CD4-positive, alpha-beta T cell (primary cell): ENCODE measurements at regions of chr2 and their contacts with region 1.

Region 1: GRCh38 chr2:134245340-134245984 is 8.4 kb upstream of the MGAT5 start:
- DNase-seq: peak; percentile 63 to 87 (median 76)
- ATAC-seq: peak; percentile 59
- H3K4me3 ChIP-seq: no peak overlapping the region
- H3K4me3 Mint-ChIP-seq: peak overlapping the region; percentile 15
- H3K27ac ChIP-seq: no peak overlapping the region
- H3K27ac Mint-ChIP-seq: peak overlapping the region; percentile 65
- H3K4me1 ChIP-seq: peaks cover 70% of the 10 kb centered on the region
- H3K4me1 Mint-ChIP-seq: peaks cover 96% of the 10 kb centered on the region
- H3K27me3 ChIP-seq: no peaks in the 10 kb centered on the region
- H3K27me3 Mint-ChIP-seq: no peaks in the 10 kb centered on the region
- CTCF ChIP-seq: peak; percentile 86

Region 2: DNA sequence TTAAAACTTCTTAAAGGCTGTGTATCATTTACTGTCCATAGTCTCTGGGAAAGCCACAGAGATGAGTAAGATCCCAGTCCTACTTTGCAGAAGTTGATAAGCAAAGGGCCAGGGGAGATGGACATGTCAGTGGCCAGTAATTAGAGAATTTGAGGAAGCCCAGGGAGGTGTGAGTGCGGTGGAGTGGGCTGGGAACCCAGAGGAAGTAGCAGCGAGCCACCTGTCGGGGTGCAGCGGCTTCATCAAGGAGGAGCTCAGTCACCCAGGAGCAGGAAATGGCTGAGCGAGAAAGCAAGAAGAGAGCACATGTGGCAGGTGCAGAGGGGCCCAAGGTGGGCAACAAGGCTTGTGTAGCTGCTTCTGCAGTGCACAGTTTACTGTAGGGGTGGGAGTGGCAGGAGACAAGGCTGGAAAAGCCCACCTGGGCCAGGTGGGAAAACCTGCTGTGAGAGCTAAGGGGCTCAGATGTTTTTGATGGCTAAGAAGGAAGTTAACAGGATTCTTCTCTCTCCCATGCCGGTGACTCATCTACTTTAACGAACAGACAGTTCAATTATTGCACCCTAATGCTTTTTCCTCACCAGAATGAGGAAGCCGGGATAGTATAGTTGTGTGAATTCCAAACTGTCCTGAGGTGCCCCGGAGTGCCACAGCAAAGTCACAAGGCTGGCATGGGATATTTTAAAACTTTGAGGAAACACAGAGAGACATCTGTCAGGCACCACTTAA is 26.4 kb before region 1 on chr2:
- CTCF ChIA-PET with region 1: interaction called, 18 read pairs
- POLR2A ChIA-PET with region 1: no interaction called
- intact Hi-C with region 1: no loop called
- DNase-seq: peak; percentile 12 to 77 (median 40)
- ATAC-seq: peak; percentile 71
- H3K4me3 ChIP-seq: peak overlapping the region; percentile 15
- H3K4me3 Mint-ChIP-seq: peak overlapping the region; percentile 49
- H3K27ac ChIP-seq: peak overlapping the region; percentile 32 to 69
- H3K27ac Mint-ChIP-seq: peak overlapping the region; percentile 87
- H3K4me1 ChIP-seq: peaks cover 50% of the 10 kb centered on the region
- H3K4me1 Mint-ChIP-seq: peaks cover 76% of the 10 kb centered on the region
- H3K27me3 ChIP-seq: no peaks in the 10 kb centered on the region
- H3K27me3 Mint-ChIP-seq: no peaks in the 10 kb centered on the region
- CTCF ChIP-seq: no peak

Region 3: GRCh38 chr2:134258684-134259388 is 13.4 kb after region 1 on chr2:
- CTCF ChIA-PET with region 1: interaction called, 10 read pairs
- POLR2A ChIA-PET with region 1: interaction called, 10 read pairs
- intact Hi-C with region 1: loop called in 1 of 2 experiments (anchors 1 kb)
- DNase-seq: peak; percentile 43 to 85 (median 60)
- ATAC-seq: peak; percentile 90
- H3K4me3 ChIP-seq: no peak overlapping the region
- H3K4me3 Mint-ChIP-seq: peak overlapping the region; percentile 77
- H3K27ac ChIP-seq: peak overlapping the region; percentile 44 to 49
- H3K27ac Mint-ChIP-seq: peak overlapping the region; percentile 91
- H3K4me1 ChIP-seq: peaks cover 69% of the 10 kb centered on the region
- H3K4me1 Mint-ChIP-seq: peaks cover 95% of the 10 kb centered on the region
- H3K27me3 ChIP-seq: no peaks in the 10 kb centered on the region
- H3K27me3 Mint-ChIP-seq: no peaks in the 10 kb centered on the region
- CTCF ChIP-seq: no peak

Region 4: DNA sequence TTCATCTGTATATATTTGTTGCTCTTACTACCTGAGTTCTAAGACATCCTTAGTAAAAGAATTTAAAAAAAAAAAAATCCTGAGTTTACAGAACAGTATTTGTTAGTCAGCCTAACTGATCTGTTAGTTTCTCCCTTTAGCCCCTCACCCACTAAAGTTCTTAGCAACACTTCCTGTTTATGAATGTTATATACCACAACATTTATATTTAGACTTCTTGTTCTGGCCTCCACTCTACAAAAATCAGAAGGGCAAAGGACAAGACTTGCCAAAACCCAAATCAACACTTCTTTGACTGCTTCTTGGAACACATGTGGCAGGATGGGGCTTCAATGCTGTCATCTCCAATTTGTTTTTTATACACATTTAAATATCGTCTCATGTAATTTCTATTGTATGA is 79.5 kb after region 1 on chr2:
- CTCF ChIA-PET with region 1: interaction called, 5 read pairs
- POLR2A ChIA-PET with region 1: interaction called, 4 read pairs
- intact Hi-C with region 1: loop called in 1 of 2 experiments (anchors 5 kb)
- DNase-seq: peak in 3 of 14 experiments; percentile 33 to 69 (median 46)
- ATAC-seq: peak; percentile 38
- H3K4me3 ChIP-seq: no peak overlapping the region
- H3K4me3 Mint-ChIP-seq: no peak overlapping the region
- H3K27ac ChIP-seq: peak overlapping the region in 1 of 2 donors; percentile 30
- H3K27ac Mint-ChIP-seq: no peak overlapping the region
- H3K4me1 ChIP-seq: peaks cover 20% of the 10 kb centered on the region
- H3K4me1 Mint-ChIP-seq: peaks cover 86% of the 10 kb centered on the region
- H3K27me3 ChIP-seq: no peaks in the 10 kb centered on the region
- H3K27me3 Mint-ChIP-seq: no peaks in the 10 kb centered on the region
- CTCF ChIP-seq: no peak